ENCODE measurements at regions of chr2 and their contacts with region 1.

Region 1: DNA sequence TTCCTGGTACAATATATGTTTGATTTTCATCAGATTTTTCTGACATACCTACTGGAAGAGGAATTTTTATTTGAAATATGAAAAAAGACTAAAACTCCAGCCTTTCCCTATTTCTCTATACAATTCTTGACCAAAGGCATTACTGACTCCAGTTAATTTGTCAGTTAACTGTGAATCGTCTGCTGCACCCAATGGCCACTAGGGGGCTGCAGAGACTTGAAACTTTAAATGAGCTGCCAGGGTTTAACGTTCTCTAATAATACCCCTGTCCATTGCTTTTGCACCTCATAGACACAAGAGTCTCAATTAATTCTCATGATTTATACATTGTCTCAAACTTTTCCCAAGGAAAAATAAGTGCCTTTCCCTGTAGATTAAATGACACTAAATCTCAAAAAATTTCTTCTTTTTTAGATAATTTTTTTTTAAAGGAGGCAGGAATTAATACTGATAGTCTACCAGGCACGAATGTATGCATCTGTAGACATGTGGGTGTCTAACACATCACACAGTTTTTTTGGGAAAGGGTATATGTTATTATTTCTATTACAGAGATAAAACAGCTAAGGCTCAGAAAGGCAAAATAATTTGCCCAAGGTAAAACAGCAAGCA is 1.8 kb upstream of the ALK start:
- DNase-seq: peak; percentile 78
- ATAC-seq: no peak
- H3K4me3 Mint-ChIP-seq: no peak overlapping the region
- H3K27ac Mint-ChIP-seq: no peak overlapping the region
- H3K4me1 Mint-ChIP-seq: peaks cover 8% of the 10 kb centered on the region
- H3K27me3 Mint-ChIP-seq: peaks cover 46% of the 10 kb centered on the region
- CTCF ChIP-seq: peak; percentile 92

Region 2: DNA sequence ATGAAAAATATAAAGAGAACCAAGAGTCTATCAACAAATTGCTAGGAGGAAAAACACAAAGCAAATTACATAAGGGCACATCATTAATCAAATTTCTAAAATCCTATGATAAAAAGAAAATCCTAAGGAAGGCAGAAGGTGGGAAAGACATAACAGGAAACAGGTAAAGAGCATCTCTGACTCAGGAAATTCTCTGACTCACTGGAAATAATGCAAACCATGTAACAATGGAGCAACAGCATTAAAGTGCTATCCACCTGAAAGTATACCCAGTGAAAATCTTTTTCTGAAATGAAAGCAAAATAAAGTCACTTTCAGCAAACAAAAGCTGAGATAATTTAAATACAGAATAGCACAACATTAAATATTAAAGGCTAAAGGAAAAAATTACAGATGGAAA is 12.8 kb before region 1 on chr2:
- CTCF ChIA-PET with region 1: interaction called, 14 read pairs
- POLR2A ChIA-PET with region 1: interaction called, 3 read pairs
- intact Hi-C with region 1: no loop called
- DNase-seq: no peak
- ATAC-seq: no peak
- H3K4me3 Mint-ChIP-seq: no peak overlapping the region
- H3K27ac Mint-ChIP-seq: no peak overlapping the region
- H3K4me1 Mint-ChIP-seq: no peaks in the 10 kb centered on the region
- H3K27me3 Mint-ChIP-seq: peaks cover 9% of the 10 kb centered on the region
- CTCF ChIP-seq: no peak

Region 3: DNA sequence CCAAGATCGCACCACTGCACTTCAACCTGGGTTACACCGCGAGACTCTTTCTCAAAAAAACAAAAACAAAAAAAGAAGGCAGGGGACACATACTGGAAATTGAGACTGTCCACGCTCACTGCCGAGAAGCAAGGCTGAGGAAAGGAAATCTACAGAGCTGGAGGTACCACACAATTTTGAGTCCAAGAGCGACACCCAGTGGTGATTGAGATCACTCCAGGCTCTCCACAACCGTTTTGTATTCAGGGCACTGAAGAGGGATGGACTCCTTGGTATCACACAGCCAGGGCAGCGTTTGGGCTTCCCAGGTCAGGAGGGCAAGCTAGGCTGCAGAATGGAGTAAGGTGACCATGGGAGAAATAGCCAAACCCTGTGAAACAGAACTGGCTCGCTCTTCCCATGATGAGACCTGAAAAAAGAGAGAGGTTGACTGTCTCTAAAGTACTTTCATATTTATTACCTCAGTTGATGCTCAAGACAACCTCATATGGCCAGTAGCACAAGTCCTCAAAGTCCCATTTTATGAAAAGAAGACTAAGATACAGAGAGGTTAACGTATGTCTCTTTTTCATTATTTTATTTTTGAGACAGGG is 149.1 kb after region 1 on chr2:
- CTCF ChIA-PET with region 1: interaction called, 67 read pairs
- POLR2A ChIA-PET with region 1: no interaction called
- intact Hi-C with region 1: loop called (anchors 5 kb)
- DNase-seq: peak; percentile 82
- ATAC-seq: peak; percentile 91
- H3K4me3 Mint-ChIP-seq: no peak overlapping the region
- H3K27ac Mint-ChIP-seq: no peak overlapping the region
- H3K4me1 Mint-ChIP-seq: no peaks in the 10 kb centered on the region
- H3K27me3 Mint-ChIP-seq: peaks cover 22% of the 10 kb centered on the region
- CTCF ChIP-seq: peak; percentile 82

Measured in activated CD8-positive, alpha-beta T cell treated with anti-CD3 and anti-CD28 coated beads for 36 hours (primary cell).